HCT116 (cell line): ENCODE measurements at regions of chr7 and their contacts with region 1.

Region 1: GRCh38 chr7:118352854-118353453 is 128.4 kb downstream of the ANKRD7 start:
- DNase-seq: peak; percentile 52
- ATAC-seq: peak; percentile 74
- H3K4me3 ChIP-seq: no peak overlapping the region
- H3K27ac ChIP-seq: no peak overlapping the region
- H3K4me1 ChIP-seq: no peaks in the 10 kb centered on the region
- H3K27me3 ChIP-seq: no peaks in the 10 kb centered on the region
- CTCF ChIP-seq: peak; percentile 27 to 60 (median 41); a peak in 4 of 6 replicates
- POLR2A ChIP-seq: no peak
- RAD21 ChIP-seq: peak; percentile 80

Region 2: DNA sequence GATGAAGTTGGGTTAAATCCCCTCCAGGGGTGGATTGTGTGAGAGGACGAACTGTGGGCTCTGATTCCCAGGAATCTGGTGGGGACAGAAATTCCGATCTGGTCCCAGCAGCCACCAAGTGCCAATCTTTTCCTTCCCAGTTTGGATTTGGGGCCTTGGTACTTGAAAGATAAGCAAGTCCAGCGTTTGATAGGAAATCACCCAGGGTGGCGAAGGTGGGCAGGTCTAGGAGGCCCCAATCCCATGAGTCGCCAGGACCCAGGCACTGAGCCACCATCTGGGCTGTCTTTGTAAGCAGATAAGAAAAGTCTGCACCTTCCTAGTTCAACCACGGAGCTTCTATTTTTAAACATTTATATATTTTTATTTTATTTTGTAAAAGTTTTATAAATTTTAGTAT is 291.6 kb before region 1 on chr7:
- CTCF ChIA-PET with region 1: no interaction called
- POLR2A ChIA-PET with region 1: no interaction called
- RAD21 ChIA-PET with region 1: no interaction called
- intact Hi-C with region 1: no loop called
- DNase-seq: no peak
- ATAC-seq: no peak
- H3K4me3 ChIP-seq: no peak overlapping the region
- H3K27ac ChIP-seq: no peak overlapping the region
- H3K4me1 ChIP-seq: no peaks in the 10 kb centered on the region
- H3K27me3 ChIP-seq: 0 out of 2 replicates have a peak, but pooled peaks cover 4% of the 10 kb centered on the region
- CTCF ChIP-seq: no peak
- POLR2A ChIP-seq: no peak
- RAD21 ChIP-seq: no peak

Region 3: GRCh38 chr7:118372530-118372929 is 19.6 kb after region 1 on chr7:
- CTCF ChIA-PET with region 1: no interaction called
- POLR2A ChIA-PET with region 1: no interaction called
- RAD21 ChIA-PET with region 1: no interaction called
- intact Hi-C with region 1: no loop called
- DNase-seq: no peak
- ATAC-seq: no peak
- H3K4me3 ChIP-seq: no peak overlapping the region
- H3K27ac ChIP-seq: no peak overlapping the region
- H3K4me1 ChIP-seq: no peaks in the 10 kb centered on the region
- H3K27me3 ChIP-seq: no peaks in the 10 kb centered on the region
- CTCF ChIP-seq: no peak
- POLR2A ChIP-seq: no peak
- RAD21 ChIP-seq: no peak

Region 4: DNA sequence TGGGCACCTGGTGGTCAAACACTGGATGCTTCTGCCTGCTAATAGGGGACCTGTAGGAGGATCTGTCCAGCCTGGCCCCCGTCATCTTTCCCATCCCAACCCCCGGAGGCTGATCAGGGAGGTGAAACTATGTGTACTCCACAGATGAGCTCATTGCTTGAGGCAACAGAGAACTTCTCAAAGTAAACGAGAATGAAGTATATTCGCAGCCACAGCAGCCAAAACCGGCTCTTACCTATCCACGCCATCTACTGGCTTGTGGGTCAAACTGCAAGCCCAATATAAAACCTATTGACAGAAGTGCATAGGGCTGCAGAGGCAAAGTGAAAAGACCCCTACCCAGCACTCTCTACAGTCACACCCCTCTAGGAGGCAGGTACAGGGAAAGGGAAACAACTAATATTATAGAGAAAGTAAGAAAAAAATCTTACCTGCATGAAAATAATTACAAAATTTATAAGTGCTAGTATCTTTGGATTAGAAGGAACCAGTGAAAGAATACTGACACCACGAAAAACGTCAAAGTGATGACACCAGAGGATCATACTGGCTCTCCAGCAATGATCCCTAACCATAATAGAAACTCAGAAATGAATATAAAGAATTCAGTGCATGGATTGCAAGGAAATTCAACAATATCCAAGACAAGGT is 845.0 kb after region 1 on chr7:
- CTCF ChIA-PET with region 1: no interaction called
- POLR2A ChIA-PET with region 1: no interaction called
- RAD21 ChIA-PET with region 1: no interaction called
- intact Hi-C with region 1: loop called (anchors 5 kb)
- DNase-seq: peak; percentile 29
- ATAC-seq: peak; percentile 93
- H3K4me3 ChIP-seq: no peak overlapping the region
- H3K27ac ChIP-seq: no peak overlapping the region
- H3K4me1 ChIP-seq: no peaks in the 10 kb centered on the region
- H3K27me3 ChIP-seq: no peaks in the 10 kb centered on the region
- CTCF ChIP-seq: peak; percentile 44 to 85 (median 76); a peak in 5 of 6 replicates
- POLR2A ChIP-seq: no peak
- RAD21 ChIP-seq: peak; percentile 66

Region 5: DNA sequence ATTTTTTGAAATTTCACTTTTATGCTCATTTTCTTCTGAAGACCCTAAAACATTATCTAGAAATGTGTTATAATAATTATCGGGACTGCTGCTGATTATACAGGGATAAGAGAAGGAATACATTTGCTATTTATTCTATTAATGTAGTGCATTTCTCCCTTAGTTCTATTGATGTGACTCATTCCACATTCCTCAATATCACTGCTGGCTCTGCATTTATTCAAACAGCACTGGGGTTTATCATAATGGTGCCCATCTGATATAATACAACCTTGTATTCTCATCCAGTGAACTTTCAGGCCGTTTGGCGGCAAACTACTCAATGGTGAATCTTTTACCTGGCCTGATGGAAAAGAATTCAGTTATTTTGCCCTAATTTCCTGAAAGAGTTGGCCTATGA is 1927.8 kb after region 1 on chr7:
- CTCF ChIA-PET with region 1: no interaction called
- POLR2A ChIA-PET with region 1: no interaction called
- RAD21 ChIA-PET with region 1: no interaction called
- intact Hi-C with region 1: loop called (anchors 10 kb)
- DNase-seq: no peak
- ATAC-seq: no peak
- H3K4me3 ChIP-seq: no peak overlapping the region
- H3K27ac ChIP-seq: no peak overlapping the region
- H3K4me1 ChIP-seq: no peaks in the 10 kb centered on the region
- H3K27me3 ChIP-seq: no peaks in the 10 kb centered on the region
- CTCF ChIP-seq: no peak
- POLR2A ChIP-seq: no peak
- RAD21 ChIP-seq: no peak